ENCODE measurements at regions of chrX and their contacts with region 1.

Region 1: DNA sequence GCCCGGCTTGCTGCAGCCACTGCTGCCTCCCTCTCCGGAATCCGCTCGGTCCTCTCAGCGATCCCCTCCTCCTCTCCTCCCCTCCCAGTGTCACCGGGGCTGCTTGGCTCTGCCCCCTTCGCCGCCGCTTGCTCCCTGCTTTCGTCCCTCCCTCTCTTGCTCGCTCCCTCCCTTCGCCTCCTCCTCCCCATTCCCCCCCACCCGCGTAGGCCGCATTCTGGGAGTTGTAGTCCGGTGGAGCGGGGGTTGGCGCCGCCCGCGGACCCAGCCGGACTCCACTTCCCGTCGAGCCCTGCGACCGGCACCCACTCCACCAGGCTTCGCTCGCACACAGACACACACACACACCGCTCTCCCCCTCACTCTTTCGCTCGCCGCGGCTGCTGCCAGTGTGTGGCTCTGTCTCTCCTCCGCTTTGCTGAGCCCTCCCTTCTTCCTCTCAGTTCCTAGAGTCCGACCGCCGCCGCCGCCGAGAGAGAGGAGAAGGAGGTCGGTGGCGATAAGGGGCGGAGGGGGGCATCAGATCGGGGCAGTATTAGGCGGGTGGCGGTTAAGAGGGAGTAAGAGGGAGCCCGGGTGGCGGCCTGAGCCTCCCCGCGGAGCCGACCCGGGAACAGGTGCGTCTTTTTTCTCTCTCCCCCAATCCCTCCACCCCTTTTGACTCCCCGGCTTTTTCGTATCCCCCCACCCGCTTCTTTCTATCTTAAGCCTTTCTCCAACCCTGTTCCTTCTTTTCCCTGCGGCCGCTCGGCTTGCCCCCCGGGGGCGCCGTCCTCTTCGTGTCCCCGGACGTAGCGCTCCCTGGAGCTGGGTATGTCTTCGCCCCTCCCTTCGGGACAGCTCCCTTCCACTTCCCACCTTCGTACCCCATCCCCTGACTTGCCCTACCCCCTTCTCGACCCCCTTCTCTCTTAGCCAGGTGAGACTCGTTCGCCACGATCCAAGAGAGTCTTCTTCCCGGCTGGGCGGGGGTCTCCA is at the start of gene BCORL1:
- DNase-seq: peak; percentile 88 to 93
- H3K4me3 ChIP-seq: 0 out of 2 replicates have a peak within 1 kb of the TSS, but pooled peaks have one; percentile 42
- H3K4me3 Mint-ChIP-seq: no peak within 1 kb of the TSS
- H3K27ac Mint-ChIP-seq: no peak within 1 kb of the TSS
- H3K4me1 ChIP-seq: no peaks in the 10 kb centered on the region
- H3K4me1 Mint-ChIP-seq: no peaks in the 10 kb centered on the region
- H3K27me3 ChIP-seq: no peaks in the 10 kb centered on the region
- H3K27me3 Mint-ChIP-seq: no peaks in the 10 kb centered on the region
- CTCF ChIP-seq: peak in 1 of 2 experiments; percentile 9
- total RNA-seq, gene BCORL1: 19.8 and 21.1 TPM in 2 replicates

Region 2: DNA sequence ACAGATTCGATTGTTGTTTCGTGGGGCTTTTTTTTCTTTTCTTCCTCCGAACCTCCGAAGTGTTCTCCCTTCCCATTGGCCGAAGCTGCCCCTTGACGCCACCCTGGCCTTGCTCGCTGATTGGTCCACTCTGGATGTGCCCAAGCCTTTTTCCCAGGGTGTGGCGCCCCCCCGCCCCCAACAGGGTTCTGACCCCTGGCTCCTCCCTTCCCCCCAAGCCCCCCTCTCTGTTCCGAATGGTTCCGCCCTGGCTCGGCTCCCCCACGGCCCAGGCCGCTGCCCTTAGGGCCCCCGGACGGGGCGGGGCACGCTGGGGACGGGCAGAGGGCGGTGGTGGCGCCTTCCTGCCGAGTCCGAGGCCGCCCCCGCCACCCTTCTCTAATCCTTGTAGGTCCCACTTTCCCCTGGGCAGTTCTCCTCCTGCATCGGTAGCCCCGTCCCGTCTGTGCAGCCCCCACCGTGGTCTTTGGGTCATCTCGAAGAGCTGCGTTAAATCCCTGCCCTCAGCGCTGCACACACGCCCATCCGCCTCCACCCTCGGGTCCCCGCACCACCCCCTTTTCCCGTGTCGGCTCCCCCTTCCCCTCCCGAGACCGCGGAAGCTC is 51.0 kb before region 1 on chrX:
- CTCF ChIA-PET with region 1: no interaction called
- POLR2A ChIA-PET with region 1: interaction called, 19 read pairs
- intact Hi-C with region 1: loop called (anchors 1 kb)
- DNase-seq: peak; percentile 93 to 94
- H3K4me3 ChIP-seq: peak overlapping the region; percentile 76
- H3K4me3 Mint-ChIP-seq: peak overlapping the region; percentile 87
- H3K27ac Mint-ChIP-seq: peak overlapping the region; percentile 86
- H3K4me1 ChIP-seq: no peaks in the 10 kb centered on the region
- H3K4me1 Mint-ChIP-seq: no peaks in the 10 kb centered on the region
- H3K27me3 ChIP-seq: no peaks in the 10 kb centered on the region
- H3K27me3 Mint-ChIP-seq: no peaks in the 10 kb centered on the region
- CTCF ChIP-seq: no peak

Region 3: GRCh38 chrX:129961180-129962083 is 21.1 kb before region 1 on chrX:
- CTCF ChIA-PET with region 1: interaction called, 3 read pairs
- POLR2A ChIA-PET with region 1: no interaction called
- intact Hi-C with region 1: loop called (anchors 1 kb)
- DNase-seq: peak; percentile 66 to 71
- H3K4me3 ChIP-seq: peak overlapping the region; percentile 30
- H3K4me3 Mint-ChIP-seq: peak overlapping the region; percentile 50
- H3K27ac Mint-ChIP-seq: no peak overlapping the region
- H3K4me1 ChIP-seq: no peaks in the 10 kb centered on the region
- H3K4me1 Mint-ChIP-seq: no peaks in the 10 kb centered on the region
- H3K27me3 ChIP-seq: no peaks in the 10 kb centered on the region
- H3K27me3 Mint-ChIP-seq: no peaks in the 10 kb centered on the region
- CTCF ChIP-seq: no peak

Region 4: DNA sequence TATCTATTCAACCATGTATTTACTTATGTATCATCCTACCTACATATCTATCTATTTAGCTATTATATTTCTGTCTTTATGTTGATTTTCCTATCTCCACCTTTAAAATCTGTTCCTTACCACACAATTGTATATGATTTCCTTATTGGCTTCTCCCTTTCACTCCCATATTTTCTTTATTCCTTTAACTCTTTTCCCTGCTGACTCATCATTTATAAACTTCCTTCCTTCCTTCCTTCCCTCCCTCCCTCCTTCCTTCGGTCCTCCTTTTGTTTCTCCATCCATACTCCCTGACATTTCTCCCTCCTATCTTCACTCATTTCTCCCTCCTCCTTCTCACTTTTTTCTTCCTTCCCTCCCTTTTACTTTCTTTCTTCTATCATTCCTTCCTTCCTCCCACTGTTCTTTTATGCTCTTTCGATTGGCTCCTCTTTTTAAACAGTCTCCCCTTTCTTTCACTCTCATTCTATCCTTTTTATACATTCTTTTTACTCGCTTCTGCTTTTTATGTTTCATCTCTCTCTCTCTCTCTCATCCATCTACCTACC is 519.5 kb after region 1 on chrX:
- CTCF ChIA-PET with region 1: no interaction called
- POLR2A ChIA-PET with region 1: no interaction called
- intact Hi-C with region 1: no loop called
- DNase-seq: no peak
- H3K4me3 ChIP-seq: no peak overlapping the region
- H3K4me3 Mint-ChIP-seq: no peak overlapping the region
- H3K27ac Mint-ChIP-seq: no peak overlapping the region
- H3K4me1 ChIP-seq: no peaks in the 10 kb centered on the region
- H3K4me1 Mint-ChIP-seq: no peaks in the 10 kb centered on the region
- H3K27me3 ChIP-seq: no peaks in the 10 kb centered on the region
- H3K27me3 Mint-ChIP-seq: peaks cover 27% of the 10 kb centered on the region
- CTCF ChIP-seq: no peak